Right lobe of liver (tissue), 6 donors: ENCODE measurements at regions of chr17 and their contacts with region 1.

Region 1: DNA sequence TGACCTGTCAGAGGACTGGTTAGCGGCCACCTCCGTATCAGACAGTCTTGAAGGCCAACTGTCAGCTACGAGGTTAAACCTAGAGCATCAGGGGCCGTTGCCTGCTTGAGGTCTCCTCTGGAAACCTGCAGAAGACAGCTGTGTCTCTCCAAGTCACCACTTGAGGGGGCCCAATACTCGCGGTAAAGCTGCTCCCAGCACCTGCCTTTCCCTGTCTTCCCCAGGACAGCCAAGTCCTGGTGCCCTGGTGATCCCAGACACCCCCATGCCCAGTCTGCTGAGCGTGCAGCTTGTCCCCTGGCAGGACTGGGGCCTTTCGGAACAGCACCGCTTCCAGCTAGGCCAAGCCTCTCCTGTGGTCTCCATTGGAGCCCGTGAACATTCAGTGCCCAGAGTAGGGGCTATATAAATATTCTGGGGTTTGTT is 80.1 kb downstream of the DNAH17 start:
- DNase-seq: peak; percentile 69 to 77 (median 75)
- ATAC-seq: peak; percentile 83 to 95 (median 91)
- H3K4me3 ChIP-seq: no peak overlapping the region
- H3K27ac ChIP-seq: no peak overlapping the region
- H3K4me1 ChIP-seq: no peaks in the 10 kb centered on the region
- H3K27me3 ChIP-seq: no peaks in the 10 kb centered on the region
- CTCF ChIP-seq: peak; percentile 61 to 70 (median 68)
- POLR2A ChIP-seq: no peak

Region 2: GRCh38 chr17:78708510-78708973 is 211.4 kb after region 1 on chr17:
- intact Hi-C with region 1: loop called in 1 of 2 experiments (anchors 10 kb)
- DNase-seq: peak; percentile 74 to 81 (median 80)
- ATAC-seq: peak; percentile 97 to 99 (median 98)
- H3K4me3 ChIP-seq: no peak overlapping the region
- H3K27ac ChIP-seq: peak overlapping the region in 1 of 3 donors; percentile 6
- H3K4me1 ChIP-seq: peaks cover 0 to 18% (median 3%) of the 10 kb centered on the region in 4 donors
- H3K27me3 ChIP-seq: no peaks in the 10 kb centered on the region
- CTCF ChIP-seq: peak; percentile 75 to 91 (median 87)
- POLR2A ChIP-seq: no peak

Region 3: GRCh38 chr17:78806451-78806850 is 309.3 kb after region 1 on chr17:
- intact Hi-C with region 1: loop called in 1 of 2 experiments (anchors 10 kb)
- DNase-seq: no peak
- ATAC-seq: peak; percentile 18 to 50 (median 35)
- H3K4me3 ChIP-seq: no peak overlapping the region
- H3K27ac ChIP-seq: no peak overlapping the region
- H3K4me1 ChIP-seq: no peaks in the 10 kb centered on the region
- H3K27me3 ChIP-seq: no peaks in the 10 kb centered on the region
- CTCF ChIP-seq: no peak
- POLR2A ChIP-seq: no peak